ENCODE measurements at regions of chr10 and their contacts with region 1.

Region 1: DNA sequence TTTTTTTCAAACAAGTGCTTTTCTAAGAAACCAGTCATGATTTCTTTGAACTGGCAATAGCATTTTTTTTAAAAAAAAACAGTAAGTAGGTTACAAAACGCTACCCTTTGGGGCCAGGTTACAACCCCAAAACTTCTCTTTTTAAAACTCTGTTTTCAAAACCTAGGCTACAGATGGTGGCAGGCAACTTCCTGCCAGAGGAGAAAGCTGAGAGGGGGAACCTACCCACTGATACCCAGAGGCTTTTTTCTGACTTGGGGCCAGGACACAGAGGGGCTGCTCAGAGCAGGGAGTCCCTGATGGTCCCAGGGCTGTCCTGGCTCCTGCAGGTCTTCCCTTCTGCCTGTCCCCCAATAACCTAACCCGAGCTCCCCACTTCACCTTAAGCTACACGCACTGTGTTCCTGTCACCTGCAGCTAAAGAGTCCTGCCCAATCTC is 6.9 kb downstream of the STN1 start:
- DNase-seq: peak; percentile 60
- H3K4me3 Mint-ChIP-seq: peak overlapping the region; percentile 52
- H3K27ac Mint-ChIP-seq: peak overlapping the region; percentile 99
- H3K4me1 Mint-ChIP-seq: peaks cover 71% of the 10 kb centered on the region
- H3K27me3 Mint-ChIP-seq: no peaks in the 10 kb centered on the region

Region 2: DNA sequence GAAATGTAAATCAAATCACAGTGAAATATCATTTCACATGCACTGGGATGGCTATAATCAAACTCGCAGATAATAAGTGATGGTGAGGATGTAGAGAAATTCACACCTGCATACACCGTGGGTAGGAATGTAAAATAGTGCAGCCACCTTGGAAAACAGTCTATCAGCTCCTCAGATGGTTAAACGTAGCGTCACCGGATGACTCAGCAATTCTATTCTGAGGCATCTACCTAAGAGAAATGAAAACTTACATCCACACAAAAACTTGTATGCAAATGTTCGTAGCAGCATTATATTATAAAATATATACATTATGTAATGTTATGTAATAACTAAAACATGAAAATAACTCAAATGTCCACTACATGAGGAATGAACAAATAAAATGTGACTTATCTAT is 94.6 kb before region 1 on chr10:
- CTCF ChIA-PET with region 1: no interaction called
- POLR2A ChIA-PET with region 1: no interaction called
- intact Hi-C with region 1: no loop called
- DNase-seq: no peak
- H3K4me3 Mint-ChIP-seq: no peak overlapping the region
- H3K27ac Mint-ChIP-seq: no peak overlapping the region
- H3K4me1 Mint-ChIP-seq: peaks cover 3% of the 10 kb centered on the region
- H3K27me3 Mint-ChIP-seq: no peaks in the 10 kb centered on the region

Region 3: DNA sequence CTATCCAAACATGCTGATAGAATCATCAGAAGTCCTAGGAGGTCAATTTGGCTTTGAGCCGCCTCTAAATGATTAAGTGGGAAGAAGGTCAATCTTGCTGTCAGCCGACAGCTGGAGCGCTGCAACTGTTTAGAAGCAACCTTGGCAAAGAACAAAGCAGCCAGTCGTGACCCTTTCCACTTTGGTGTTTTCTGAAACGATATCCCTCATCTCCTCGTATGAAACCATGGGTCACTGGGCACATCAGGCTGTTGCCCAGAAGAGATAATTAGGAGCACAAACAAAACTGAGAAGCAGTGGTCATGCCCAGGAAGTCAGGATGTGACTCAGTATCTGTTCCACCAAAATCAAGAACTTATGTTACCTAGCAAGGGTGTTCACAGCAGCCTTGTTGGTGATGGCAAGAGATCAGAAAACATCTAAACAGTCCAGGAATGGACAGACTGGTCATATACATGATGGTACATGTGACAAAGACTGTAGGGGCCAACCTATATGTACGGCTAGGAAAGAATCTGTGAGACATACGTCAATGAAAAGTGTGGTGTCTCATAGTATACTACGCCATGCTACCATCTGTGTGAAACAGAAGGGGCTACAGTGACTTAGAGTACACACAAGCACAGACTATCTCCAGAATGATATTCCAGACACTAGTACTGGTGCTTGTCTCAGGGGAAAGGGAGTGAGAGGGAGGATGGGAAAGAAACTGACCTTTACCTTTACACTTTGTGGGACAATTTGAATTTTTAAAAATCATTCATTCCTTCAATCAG is 15.4 kb before region 1 on chr10:
- CTCF ChIA-PET with region 1: interaction called, 5 read pairs
- POLR2A ChIA-PET with region 1: interaction called, 4 read pairs
- intact Hi-C with region 1: loop called (anchors 1 kb)
- DNase-seq: peak; percentile 45
- H3K4me3 Mint-ChIP-seq: no peak overlapping the region
- H3K27ac Mint-ChIP-seq: peak overlapping the region; percentile 82
- H3K4me1 Mint-ChIP-seq: peaks cover 65% of the 10 kb centered on the region
- H3K27me3 Mint-ChIP-seq: no peaks in the 10 kb centered on the region

Region 4: DNA sequence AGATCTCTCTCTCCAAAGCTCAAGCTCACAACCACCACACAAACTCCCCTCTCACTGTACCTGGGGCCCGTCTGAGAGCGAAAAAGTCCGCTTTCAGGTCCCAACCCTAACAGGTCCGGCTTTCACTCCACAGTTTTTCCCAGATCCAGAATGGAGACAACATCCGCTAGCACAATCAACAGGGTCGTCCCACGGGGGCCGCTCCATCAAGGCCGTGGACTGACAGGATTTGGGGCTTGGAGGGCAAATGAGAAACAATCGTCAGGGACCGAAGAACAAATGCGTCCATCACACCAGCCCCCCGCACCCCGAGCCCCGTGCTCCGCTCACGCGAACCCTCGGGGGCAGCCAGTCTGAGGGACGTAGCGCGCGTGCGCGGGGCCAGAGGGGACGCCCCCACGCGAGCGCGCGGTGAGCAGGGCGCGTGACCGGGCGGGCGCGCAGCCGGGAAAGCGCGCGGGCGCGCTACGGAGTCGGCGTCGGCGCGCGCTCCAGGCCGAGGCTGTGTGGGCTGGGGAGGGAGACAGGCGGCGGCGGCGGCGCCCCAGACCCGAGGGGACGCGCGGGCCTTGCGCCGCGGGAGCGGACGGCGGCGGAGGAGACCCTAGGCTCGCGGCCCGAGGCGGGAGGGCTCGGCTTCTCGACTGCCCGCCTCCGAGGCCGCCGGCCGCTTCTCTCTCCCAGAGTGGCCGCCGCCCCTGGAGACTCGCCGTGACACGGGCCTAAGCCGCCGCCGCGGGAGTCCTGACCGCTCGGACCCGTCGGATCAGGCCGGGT is 55.8 kb after region 1 on chr10 and contains the start of gene SLK:
- CTCF ChIA-PET with region 1: no interaction called
- POLR2A ChIA-PET with region 1: interaction called, 5 read pairs
- intact Hi-C with region 1: loop called (anchors 2 kb)
- DNase-seq: peak; percentile 86
- H3K4me3 Mint-ChIP-seq: peak within 1 kb of the TSS; percentile 94
- H3K27ac Mint-ChIP-seq: peak within 1 kb of the TSS; percentile 92
- H3K4me1 Mint-ChIP-seq: peaks cover 33% of the 10 kb centered on the region
- H3K27me3 Mint-ChIP-seq: no peaks in the 10 kb centered on the region
- total RNA-seq, gene SLK: 26.1 to 27.7 TPM